ENCODE measurements at regions of chr1 and their contacts with region 1.

Region 1: GRCh38 chr1:177620694-177621093 is 349.2 kb downstream of the SEC16B start:
- DNase-seq: no peak
- H3K4me3 ChIP-seq: no peak overlapping the region
- H3K27ac ChIP-seq: no peak overlapping the region
- H3K4me1 ChIP-seq: no peaks in the 10 kb centered on the region
- H3K27me3 ChIP-seq: no peaks in the 10 kb centered on the region
- CTCF ChIP-seq: no peak

Region 2: GRCh38 chr1:176315519-176316220 is 1305.0 kb before region 1 on chr1:
- CTCF ChIA-PET with region 1: no interaction called
- POLR2A ChIA-PET with region 1: no interaction called
- intact Hi-C with region 1: no loop called
- DNase-seq: no peak
- H3K4me3 ChIP-seq: no peak overlapping the region
- H3K27ac ChIP-seq: no peak overlapping the region
- H3K4me1 ChIP-seq: no peaks in the 10 kb centered on the region
- H3K27me3 ChIP-seq: no peaks in the 10 kb centered on the region
- CTCF ChIP-seq: no peak

Region 3: GRCh38 chr1:177632912-177633615 is 12.4 kb after region 1 on chr1:
- CTCF ChIA-PET with region 1: no interaction called
- POLR2A ChIA-PET with region 1: interaction called, 11 read pairs
- intact Hi-C with region 1: no loop called
- DNase-seq: no peak
- H3K4me3 ChIP-seq: no peak overlapping the region
- H3K27ac ChIP-seq: peak overlapping the region; percentile 5
- H3K4me1 ChIP-seq: peaks cover 15% of the 10 kb centered on the region
- H3K27me3 ChIP-seq: no peaks in the 10 kb centered on the region
- CTCF ChIP-seq: no peak

Measured in A673 (cell line).